Thyroid gland (tissue), 4 donors: ENCODE measurements at regions of chr11 and their contacts with region 1.

Region 1: GRCh38 chr11:59615637-59616395 is at the start of gene OSBP:
- DNase-seq: peak; percentile 100
- H3K4me3 ChIP-seq: peak within 1 kb of the TSS; percentile 59 to 76 (median 66)
- H3K27ac ChIP-seq: peak within 1 kb of the TSS; percentile 78 to 92 (median 90)
- H3K4me1 ChIP-seq: peaks cover 26 to 27% of the 10 kb centered on the region in 2 donors
- H3K27me3 ChIP-seq: no peaks in the 10 kb centered on the region
- CTCF ChIP-seq: peak in 1 of 6 experiments; percentile 39
- POLR2A ChIP-seq: peak; percentile 19 to 91
- total RNA-seq, gene OSBP: 47.3 to 59.6 (median 49.5) TPM

Region 2: DNA sequence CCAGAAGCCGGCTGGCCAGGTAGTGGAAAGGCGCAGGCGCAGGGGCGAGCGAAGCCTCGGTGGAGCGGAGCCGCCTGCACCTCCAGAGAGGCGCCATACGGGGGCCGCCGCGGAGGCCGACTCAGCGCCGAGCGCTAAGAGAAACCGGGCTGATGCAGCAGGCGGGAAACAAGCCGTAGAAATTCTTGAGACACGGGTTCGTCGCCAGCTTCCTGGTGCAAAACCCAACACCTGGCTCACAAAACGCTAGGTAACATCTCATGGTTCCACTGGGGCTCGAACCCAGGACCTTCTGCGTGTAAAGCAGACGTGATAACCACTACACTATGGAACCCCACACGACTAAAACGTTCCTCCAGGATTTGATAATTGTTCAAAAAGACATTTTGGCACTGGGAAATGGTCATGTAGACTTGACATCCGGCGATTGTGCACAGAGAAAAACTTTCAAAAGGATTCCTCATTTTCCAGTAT is 65.4 kb before region 1 on chr11:
- intact Hi-C with region 1: loop called (anchors 10 kb)
- DNase-seq: peak; percentile 82 to 83
- H3K4me3 ChIP-seq: peak overlapping the region in 2 of 3 donors; percentile 34 to 69
- H3K27ac ChIP-seq: peak overlapping the region; percentile 87 to 90 (median 89)
- H3K4me1 ChIP-seq: peaks cover 0 to 5% of the 10 kb centered on the region in 2 donors
- H3K27me3 ChIP-seq: no peaks in the 10 kb centered on the region
- CTCF ChIP-seq: peak; percentile 9 to 60 (median 56)
- POLR2A ChIP-seq: no peak

Region 3: DNA sequence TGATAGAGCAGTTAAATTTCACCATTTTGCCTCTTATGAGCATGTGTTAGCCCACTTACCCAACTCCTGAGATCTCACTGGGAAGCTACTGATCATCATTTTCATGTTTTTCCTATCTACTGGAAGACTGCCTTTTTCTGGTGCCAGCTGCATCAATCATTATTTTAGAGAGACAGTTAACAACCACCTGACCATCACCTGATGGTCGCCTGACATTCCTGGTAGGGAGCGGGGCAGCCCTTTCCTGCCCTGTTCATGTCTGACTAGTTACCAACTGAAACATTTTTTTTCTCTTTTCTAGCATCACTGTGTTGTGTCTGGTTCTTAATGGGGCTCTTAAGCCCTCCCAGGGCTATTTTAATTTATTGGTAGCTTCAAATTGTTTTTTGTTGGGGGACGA is 73.2 kb after region 1 on chr11:
- intact Hi-C with region 1: no loop called
- DNase-seq: no peak
- H3K4me3 ChIP-seq: no peak overlapping the region
- H3K27ac ChIP-seq: no peak overlapping the region
- H3K4me1 ChIP-seq: no peaks in the 10 kb centered on the region
- H3K27me3 ChIP-seq: no peaks in the 10 kb centered on the region
- CTCF ChIP-seq: no peak
- POLR2A ChIP-seq: no peak